CD4-positive, alpha-beta T cell (primary cell): ENCODE measurements at regions of chr5 and their contacts with region 1.

Region 1: GRCh38 chr5:71461360-71461759 is 5.9 kb downstream of the BDP1 start:
- DNase-seq: no peak
- ATAC-seq: no peak
- H3K4me3 ChIP-seq: no peak overlapping the region
- H3K4me3 Mint-ChIP-seq: no peak overlapping the region
- H3K27ac ChIP-seq: no peak overlapping the region
- H3K27ac Mint-ChIP-seq: no peak overlapping the region
- H3K4me1 ChIP-seq: peaks cover 5% of the 10 kb centered on the region
- H3K4me1 Mint-ChIP-seq: peaks cover 20% of the 10 kb centered on the region
- H3K27me3 ChIP-seq: no peaks in the 10 kb centered on the region
- H3K27me3 Mint-ChIP-seq: no peaks in the 10 kb centered on the region
- CTCF ChIP-seq: no peak

Region 2: DNA sequence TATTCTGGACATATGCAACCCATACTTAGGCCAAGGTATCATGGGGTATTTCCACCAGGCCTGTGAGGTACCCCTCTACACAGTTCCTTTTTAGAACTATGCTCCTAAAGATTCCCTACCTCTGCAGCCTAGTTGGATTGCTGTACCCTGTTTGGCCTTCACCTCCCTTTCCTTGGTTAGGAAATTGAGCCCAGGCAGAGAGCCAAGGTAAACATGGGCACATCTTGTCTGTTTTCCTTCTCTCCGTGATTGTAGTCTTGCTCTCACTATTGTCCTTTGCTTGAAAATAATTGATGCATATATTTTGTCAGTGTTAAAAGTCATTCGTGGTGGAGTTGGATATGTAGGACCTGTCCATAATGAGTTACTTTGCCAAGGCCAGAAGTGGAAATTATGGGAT is 20.8 kb after region 1 on chr5:
- CTCF ChIA-PET with region 1: no interaction called
- POLR2A ChIA-PET with region 1: no interaction called
- intact Hi-C with region 1: no loop called
- DNase-seq: no peak
- ATAC-seq: no peak
- H3K4me3 ChIP-seq: no peak overlapping the region
- H3K4me3 Mint-ChIP-seq: no peak overlapping the region
- H3K27ac ChIP-seq: no peak overlapping the region
- H3K27ac Mint-ChIP-seq: no peak overlapping the region
- H3K4me1 ChIP-seq: no peaks in the 10 kb centered on the region
- H3K4me1 Mint-ChIP-seq: peaks cover 19% of the 10 kb centered on the region
- H3K27me3 ChIP-seq: no peaks in the 10 kb centered on the region
- H3K27me3 Mint-ChIP-seq: no peaks in the 10 kb centered on the region
- CTCF ChIP-seq: no peak

Region 3: GRCh38 chr5:71508751-71509150 is 47.4 kb after region 1 on chr5:
- CTCF ChIA-PET with region 1: no interaction called
- POLR2A ChIA-PET with region 1: no interaction called
- intact Hi-C with region 1: loop called in 1 of 2 experiments (anchors 5 kb)
- DNase-seq: no peak
- ATAC-seq: no peak
- H3K4me3 ChIP-seq: no peak overlapping the region
- H3K4me3 Mint-ChIP-seq: no peak overlapping the region
- H3K27ac ChIP-seq: no peak overlapping the region
- H3K27ac Mint-ChIP-seq: no peak overlapping the region
- H3K4me1 ChIP-seq: no peaks in the 10 kb centered on the region
- H3K4me1 Mint-ChIP-seq: peaks cover 6% of the 10 kb centered on the region
- H3K27me3 ChIP-seq: no peaks in the 10 kb centered on the region
- H3K27me3 Mint-ChIP-seq: no peaks in the 10 kb centered on the region
- CTCF ChIP-seq: no peak